PC-9 (cell line): ENCODE measurements at regions of chr1 and their contacts with region 1.

Region 1: DNA sequence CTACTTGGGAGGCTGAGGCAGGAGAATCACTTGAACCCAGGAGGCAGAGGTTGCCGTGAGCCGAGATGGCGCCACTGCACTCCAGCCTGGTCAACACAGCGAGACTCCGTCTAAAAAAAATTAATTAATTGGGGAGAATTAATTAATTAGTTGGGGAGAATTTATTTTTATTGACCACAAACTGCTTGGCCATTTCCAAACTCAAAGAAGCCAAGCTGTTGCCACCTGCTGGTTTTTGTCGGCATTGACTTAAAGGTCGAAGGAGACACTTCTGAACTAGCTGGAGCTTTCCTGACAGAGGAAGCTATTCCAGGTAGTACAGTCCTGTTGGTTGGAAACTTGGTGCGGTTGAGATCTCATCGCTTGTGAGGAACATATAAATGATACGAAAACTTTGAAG is 13.1 kb downstream of the MAP1LC3C start:
- DNase-seq: no peak
- H3K4me3 ChIP-seq: no peak overlapping the region
- H3K27ac ChIP-seq: no peak overlapping the region
- H3K4me1 ChIP-seq: peaks cover 11% of the 10 kb centered on the region; the same call in 1 of the 2 replicates
- H3K27me3 ChIP-seq: no peaks in the 10 kb centered on the region
- CTCF ChIP-seq: peak; percentile 71

Region 2: DNA sequence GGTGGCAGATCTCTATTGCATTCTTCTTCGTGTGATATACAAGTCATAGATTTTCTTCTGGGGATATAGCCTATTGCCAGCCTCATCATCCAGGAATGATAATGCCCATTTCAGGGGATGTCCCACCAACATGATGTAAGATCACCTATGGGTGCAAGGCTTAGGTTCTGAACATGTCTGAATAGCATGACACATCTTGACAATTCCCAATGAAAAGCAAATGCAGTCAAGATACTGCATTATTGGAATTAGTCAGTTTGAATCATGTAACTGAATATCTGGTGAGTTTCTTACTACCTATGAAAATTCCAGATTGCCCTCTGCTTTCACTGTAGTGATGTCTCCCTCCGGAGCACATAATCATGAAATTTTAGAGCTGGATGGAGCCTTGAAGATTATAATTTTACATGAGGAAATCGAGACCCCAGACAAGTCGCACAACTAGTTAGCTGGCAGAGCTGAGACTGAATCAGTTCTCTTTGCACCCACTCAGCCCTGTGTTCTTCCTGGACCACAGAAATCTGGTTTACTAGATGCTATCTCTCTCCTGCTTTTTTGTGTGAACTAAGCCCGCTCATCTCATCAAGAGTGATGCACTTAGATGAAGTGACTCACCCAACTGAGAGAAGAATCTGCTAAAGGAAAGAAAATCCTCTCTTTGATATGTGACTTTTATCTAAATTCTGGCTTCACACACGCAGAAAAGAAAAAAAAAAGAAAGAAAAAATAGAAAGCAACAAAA is 268.7 kb before region 1 on chr1:
- CTCF ChIA-PET with region 1: no interaction called
- POLR2A ChIA-PET with region 1: no interaction called
- intact Hi-C with region 1: no loop called
- DNase-seq: no peak
- H3K4me3 ChIP-seq: no peak overlapping the region
- H3K27ac ChIP-seq: no peak overlapping the region
- H3K4me1 ChIP-seq: no peaks in the 10 kb centered on the region
- H3K27me3 ChIP-seq: no peaks in the 10 kb centered on the region
- CTCF ChIP-seq: no peak

Region 3: GRCh38 chr1:241782396-241782795 is 203.4 kb before region 1 on chr1:
- CTCF ChIA-PET with region 1: no interaction called
- POLR2A ChIA-PET with region 1: no interaction called
- intact Hi-C with region 1: no loop called
- DNase-seq: no peak
- H3K4me3 ChIP-seq: no peak overlapping the region
- H3K27ac ChIP-seq: no peak overlapping the region
- H3K4me1 ChIP-seq: 0 out of 2 replicates have a peak, but pooled peaks cover 5% of the 10 kb centered on the region
- H3K27me3 ChIP-seq: no peaks in the 10 kb centered on the region
- CTCF ChIP-seq: no peak

Region 4: GRCh38 chr1:241947354-241947753 is 38.4 kb before region 1 on chr1:
- CTCF ChIA-PET with region 1: no interaction called
- POLR2A ChIA-PET with region 1: no interaction called
- intact Hi-C with region 1: loop called (anchors 5 kb)
- DNase-seq: no peak
- H3K4me3 ChIP-seq: no peak overlapping the region
- H3K27ac ChIP-seq: no peak overlapping the region
- H3K4me1 ChIP-seq: peaks cover 8% of the 10 kb centered on the region; the same call in 1 of the 2 replicates
- H3K27me3 ChIP-seq: no peaks in the 10 kb centered on the region
- CTCF ChIP-seq: no peak